ENCODE measurements at regions of chr17 and their contacts with region 1.

Region 1: GRCh38 chr17:64041912-64042311 is 21.5 kb upstream of the ICAM2 start:
- DNase-seq: no peak
- H3K4me3 ChIP-seq: no peak overlapping the region
- H3K27ac ChIP-seq: no peak overlapping the region
- H3K4me1 ChIP-seq: peaks cover 0 to 2% (median 0%) of the 10 kb centered on the region in 4 donors
- H3K27me3 ChIP-seq: no peaks in the 10 kb centered on the region
- CTCF ChIP-seq: no peak
- EP300 ChIP-seq: no peak
- POLR2A ChIP-seq: no peak

Region 2: DNA sequence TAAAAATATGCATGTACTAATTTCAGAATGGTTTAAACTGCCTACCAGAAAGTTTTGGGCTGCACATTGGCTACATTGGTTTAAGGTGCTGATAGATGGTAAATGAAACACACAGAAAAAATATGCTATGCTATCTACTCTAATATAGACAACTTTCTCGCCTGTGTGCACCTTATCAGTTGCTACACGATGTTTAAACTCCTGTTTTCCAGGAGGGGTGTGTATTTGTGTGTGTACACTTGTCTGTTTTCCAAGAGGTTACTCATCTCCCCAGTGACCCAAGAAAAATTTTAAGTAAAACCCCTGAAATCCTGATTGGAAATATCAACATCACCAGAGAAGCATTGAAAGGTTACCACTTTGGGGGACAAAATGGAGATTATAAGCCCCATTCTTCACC is 236.3 kb before region 1 on chr17:
- in situ Hi-C with region 1: no loop called
- intact Hi-C with region 1: no loop called
- DNase-seq: no peak
- H3K4me3 ChIP-seq: no peak overlapping the region
- H3K27ac ChIP-seq: no peak overlapping the region
- H3K4me1 ChIP-seq: no peaks in the 10 kb centered on the region
- H3K27me3 ChIP-seq: no peaks in the 10 kb centered on the region
- CTCF ChIP-seq: no peak
- EP300 ChIP-seq: no peak
- POLR2A ChIP-seq: no peak

Region 3: DNA sequence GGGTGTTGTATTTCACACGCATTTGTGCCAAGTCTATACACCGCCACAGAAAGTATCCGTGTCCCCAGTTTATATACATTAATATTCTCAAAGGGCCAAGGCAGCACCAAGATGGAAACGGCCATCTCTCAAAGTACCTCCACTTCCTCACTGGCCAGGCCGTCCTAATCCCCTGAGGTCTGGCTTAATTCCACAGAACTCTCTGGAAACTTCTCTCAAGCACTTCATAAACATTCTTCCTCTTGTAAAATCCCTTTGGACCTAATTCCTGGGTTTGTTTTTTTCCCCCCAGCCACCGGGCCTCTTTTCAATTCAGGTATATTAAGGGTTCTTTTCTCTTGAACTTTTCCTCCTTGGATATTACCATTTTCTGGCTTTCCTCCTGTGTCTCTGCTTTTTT is 93.1 kb after region 1 on chr17:
- in situ Hi-C with region 1: loop called in 2 of 4 experiments (anchors 5 to 10 kb)
- intact Hi-C with region 1: no loop called
- DNase-seq: no peak
- H3K4me3 ChIP-seq: no peak overlapping the region
- H3K27ac ChIP-seq: no peak overlapping the region
- H3K4me1 ChIP-seq: peaks cover 6 to 19% (median 9%) of the 10 kb centered on the region in 4 donors
- H3K27me3 ChIP-seq: no peaks in the 10 kb centered on the region
- CTCF ChIP-seq: no peak
- EP300 ChIP-seq: no peak
- POLR2A ChIP-seq: no peak